ENCODE measurements at regions of chr10 and their contacts with region 1.

Region 1: GRCh38 chr10:6202684-6203330 is at the start of gene PFKFB3:
- DNase-seq: peak; percentile 66 to 99 (median 77)
- ATAC-seq: peak; percentile 81
- H3K4me3 ChIP-seq: peak within 1 kb of the TSS; percentile 84
- H3K4me3 Mint-ChIP-seq: peak within 1 kb of the TSS; percentile 92 to 100 (median 97)
- H3K27ac ChIP-seq: peak within 1 kb of the TSS; percentile 70
- H3K27ac Mint-ChIP-seq: peak within 1 kb of the TSS; percentile 81 to 97 (median 93)
- H3K4me1 ChIP-seq: peaks cover 0 to 12% of the 10 kb centered on the region in 2 donors
- H3K4me1 Mint-ChIP-seq: peaks cover 14 to 44% (median 35%) of the 10 kb centered on the region in 7 donors
- H3K27me3 ChIP-seq: no peaks in the 10 kb centered on the region
- H3K27me3 Mint-ChIP-seq: no peaks in the 10 kb centered on the region
- total RNA-seq, gene PFKFB3: 65.9 to 129 (median 80.5) TPM

Region 2: GRCh38 chr10:5977471-5978229 is 225.2 kb before region 1 on chr10 and contains the start of gene IL15RA:
- CTCF ChIA-PET with region 1: no interaction called
- POLR2A ChIA-PET with region 1: no interaction called
- intact Hi-C with region 1: loop called (anchors 2 to 5 kb)
- DNase-seq: peak; percentile 60 to 89 (median 71)
- ATAC-seq: peak; percentile 84
- H3K4me3 ChIP-seq: peak within 1 kb of the TSS; percentile 97
- H3K4me3 Mint-ChIP-seq: peak within 1 kb of the TSS; percentile 89 to 98 (median 96)
- H3K27ac ChIP-seq: peak within 1 kb of the TSS; percentile 74
- H3K27ac Mint-ChIP-seq: peak within 1 kb of the TSS; percentile 85 to 97 (median 89)
- H3K4me1 ChIP-seq: peaks cover 0 to 6% of the 10 kb centered on the region in 2 donors
- H3K4me1 Mint-ChIP-seq: peaks cover 12 to 36% (median 21%) of the 10 kb centered on the region in 7 donors
- H3K27me3 ChIP-seq: no peaks in the 10 kb centered on the region
- H3K27me3 Mint-ChIP-seq: peaks cover 0 to 21% (median 0%) of the 10 kb centered on the region in 5 donors
- total RNA-seq, gene IL15RA: 3.5 to 24.9 (median 5.6) TPM

Region 3: GRCh38 chr10:6108603-6109443 is 94.0 kb before region 1 on chr10:
- CTCF ChIA-PET with region 1: interaction called, 6 read pairs
- POLR2A ChIA-PET with region 1: interaction called, 7 read pairs
- intact Hi-C with region 1: loop called (anchors 1 kb)
- DNase-seq: peak in 7 of 9 donors; percentile 38 to 66 (median 62)
- ATAC-seq: peak; percentile 85
- H3K4me3 ChIP-seq: no peak overlapping the region
- H3K4me3 Mint-ChIP-seq: peak overlapping the region in 3 of 10 donors; percentile 2 to 37 (median 29)
- H3K27ac ChIP-seq: no peak overlapping the region
- H3K27ac Mint-ChIP-seq: peak overlapping the region; percentile 37 to 91 (median 80)
- H3K4me1 ChIP-seq: peaks cover 10 to 11% of the 10 kb centered on the region in 2 donors
- H3K4me1 Mint-ChIP-seq: peaks cover 11 to 38% (median 23%) of the 10 kb centered on the region in 7 donors
- H3K27me3 ChIP-seq: no peaks in the 10 kb centered on the region
- H3K27me3 Mint-ChIP-seq: no peaks in the 10 kb centered on the region

Region 4: DNA sequence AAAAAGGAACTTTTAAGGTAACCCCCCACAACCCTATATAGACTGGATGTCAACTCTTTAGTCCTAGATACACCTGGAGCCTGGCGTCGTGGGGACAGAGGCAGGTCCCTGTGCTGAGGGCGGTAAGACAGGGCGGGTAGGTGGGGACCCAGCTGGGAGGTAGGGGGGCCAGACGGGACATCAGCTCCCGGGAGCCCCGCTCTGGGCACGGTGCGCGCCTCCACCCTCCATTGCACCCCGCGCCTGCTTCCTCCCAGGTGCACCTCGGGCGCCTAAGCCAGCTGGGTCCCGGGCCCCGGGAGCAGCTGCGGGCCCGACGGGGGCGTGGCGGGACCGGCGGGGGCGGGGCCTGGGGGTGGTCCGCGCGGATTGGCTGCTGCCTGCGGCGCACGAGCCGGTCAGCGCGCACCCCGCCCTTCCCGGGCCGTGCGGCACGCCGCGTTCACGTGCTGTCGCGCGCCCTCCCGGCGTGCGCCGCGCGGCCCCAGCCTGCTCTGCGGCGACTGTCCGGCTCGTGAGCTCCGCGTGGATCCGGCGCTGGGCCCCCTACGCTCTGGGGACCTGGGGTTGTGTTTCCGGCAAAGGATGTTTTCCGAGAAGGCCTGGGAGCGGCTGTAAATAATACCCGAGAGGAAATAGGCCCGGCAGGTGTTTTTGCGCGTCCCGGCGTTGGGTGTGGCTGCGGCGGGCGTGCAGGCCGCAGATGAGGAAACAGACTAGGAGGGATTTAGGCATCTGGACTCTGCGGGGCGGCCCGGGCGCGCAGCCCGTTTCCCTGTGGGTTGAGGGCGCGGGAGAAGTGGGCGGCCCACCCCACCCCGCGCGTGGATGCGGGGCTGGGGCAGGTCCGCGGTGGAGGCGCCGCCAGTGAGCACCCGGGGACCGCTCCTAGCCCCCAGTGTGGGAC is 39.2 kb before region 1 on chr10:
- CTCF ChIA-PET with region 1: interaction called, 9 read pairs
- POLR2A ChIA-PET with region 1: interaction called, 32 read pairs
- intact Hi-C with region 1: loop called (anchors 1 kb)
- DNase-seq: peak; percentile 89 to 95 (median 94)
- ATAC-seq: peak; percentile 96
- H3K4me3 ChIP-seq: peak overlapping the region; percentile 81
- H3K4me3 Mint-ChIP-seq: peak overlapping the region; percentile 85 to 95 (median 92)
- H3K27ac ChIP-seq: peak overlapping the region; percentile 95
- H3K27ac Mint-ChIP-seq: peak overlapping the region; percentile 91 to 99 (median 97)
- H3K4me1 ChIP-seq: peaks cover 25 to 33% of the 10 kb centered on the region in 2 donors
- H3K4me1 Mint-ChIP-seq: peaks cover 30 to 64% (median 57%) of the 10 kb centered on the region in 7 donors
- H3K27me3 ChIP-seq: no peaks in the 10 kb centered on the region
- H3K27me3 Mint-ChIP-seq: no peaks in the 10 kb centered on the region

Region 5: GRCh38 chr10:6292741-6293151 is 89.9 kb after region 1 on chr10:
- CTCF ChIA-PET with region 1: no interaction called
- POLR2A ChIA-PET with region 1: no interaction called
- intact Hi-C with region 1: loop called (anchors 5 kb)
- DNase-seq: no peak
- ATAC-seq: no peak
- H3K4me3 ChIP-seq: no peak overlapping the region
- H3K4me3 Mint-ChIP-seq: peak overlapping the region in 2 of 10 donors; percentile 6 to 26
- H3K27ac ChIP-seq: no peak overlapping the region
- H3K27ac Mint-ChIP-seq: peak overlapping the region in 7 of 9 donors; percentile 10 to 72 (median 34)
- H3K4me1 ChIP-seq: peaks cover 6 to 8% of the 10 kb centered on the region in 2 donors
- H3K4me1 Mint-ChIP-seq: peaks cover 4 to 55% (median 32%) of the 10 kb centered on the region in 7 donors
- H3K27me3 ChIP-seq: no peaks in the 10 kb centered on the region
- H3K27me3 Mint-ChIP-seq: no peaks in the 10 kb centered on the region

Region 6: GRCh38 chr10:6401562-6402348 is 198.9 kb after region 1 on chr10:
- CTCF ChIA-PET with region 1: interaction called, 59 read pairs
- POLR2A ChIA-PET with region 1: interaction called, 26 read pairs
- intact Hi-C with region 1: loop called (anchors 1 kb)
- DNase-seq: peak in 8 of 9 donors; percentile 49 to 74 (median 66)
- ATAC-seq: peak; percentile 87
- H3K4me3 ChIP-seq: no peak overlapping the region
- H3K4me3 Mint-ChIP-seq: peak overlapping the region in 9 of 10 donors; percentile 0 to 49 (median 38)
- H3K27ac ChIP-seq: no peak overlapping the region
- H3K27ac Mint-ChIP-seq: peak overlapping the region in 8 of 9 donors; percentile 4 to 82 (median 56)
- H3K4me1 ChIP-seq: peaks cover 0 to 11% of the 10 kb centered on the region in 2 donors
- H3K4me1 Mint-ChIP-seq: peaks cover 4 to 33% (median 18%) of the 10 kb centered on the region in 7 donors
- H3K27me3 ChIP-seq: no peaks in the 10 kb centered on the region
- H3K27me3 Mint-ChIP-seq: peaks cover 0 to 13% (median 0%) of the 10 kb centered on the region in 5 donors

Region 7: DNA sequence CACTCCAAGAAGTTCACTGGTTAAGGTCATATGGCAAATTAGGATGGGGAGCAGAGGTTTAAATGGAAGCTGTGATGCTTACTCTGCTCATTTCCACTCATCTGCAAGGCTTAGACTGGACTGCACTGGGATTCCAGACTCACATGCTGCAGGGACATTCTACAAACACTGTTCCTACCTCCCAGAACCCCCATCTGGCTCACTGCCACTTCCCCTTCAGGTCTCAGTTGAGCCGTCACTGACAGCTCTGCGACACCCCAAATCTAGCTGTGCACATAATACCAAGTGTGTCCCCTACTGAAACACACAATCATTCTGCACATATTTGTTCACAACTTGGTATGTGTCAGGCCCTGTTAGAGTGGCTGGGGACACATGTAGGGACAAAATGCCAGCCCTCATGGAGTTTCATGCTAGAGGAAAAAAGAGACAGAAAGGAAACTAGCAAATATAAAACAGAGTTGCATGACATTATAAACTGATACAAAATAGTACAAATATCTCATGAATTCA is 371.9 kb after region 1 on chr10:
- CTCF ChIA-PET with region 1: no interaction called
- POLR2A ChIA-PET with region 1: no interaction called
- intact Hi-C with region 1: no loop called
- DNase-seq: no peak
- ATAC-seq: no peak
- H3K4me3 ChIP-seq: no peak overlapping the region
- H3K4me3 Mint-ChIP-seq: peak overlapping the region in 9 of 10 donors; percentile 51 to 79 (median 58)
- H3K27ac ChIP-seq: peak overlapping the region; percentile 25
- H3K27ac Mint-ChIP-seq: peak overlapping the region in 8 of 9 donors; percentile 26 to 85 (median 52)
- H3K4me1 ChIP-seq: peaks cover 52 to 69% of the 10 kb centered on the region in 2 donors
- H3K4me1 Mint-ChIP-seq: peaks cover 65 to 85% (median 78%) of the 10 kb centered on the region in 7 donors
- H3K27me3 ChIP-seq: no peaks in the 10 kb centered on the region
- H3K27me3 Mint-ChIP-seq: no peaks in the 10 kb centered on the region

Region 8: DNA sequence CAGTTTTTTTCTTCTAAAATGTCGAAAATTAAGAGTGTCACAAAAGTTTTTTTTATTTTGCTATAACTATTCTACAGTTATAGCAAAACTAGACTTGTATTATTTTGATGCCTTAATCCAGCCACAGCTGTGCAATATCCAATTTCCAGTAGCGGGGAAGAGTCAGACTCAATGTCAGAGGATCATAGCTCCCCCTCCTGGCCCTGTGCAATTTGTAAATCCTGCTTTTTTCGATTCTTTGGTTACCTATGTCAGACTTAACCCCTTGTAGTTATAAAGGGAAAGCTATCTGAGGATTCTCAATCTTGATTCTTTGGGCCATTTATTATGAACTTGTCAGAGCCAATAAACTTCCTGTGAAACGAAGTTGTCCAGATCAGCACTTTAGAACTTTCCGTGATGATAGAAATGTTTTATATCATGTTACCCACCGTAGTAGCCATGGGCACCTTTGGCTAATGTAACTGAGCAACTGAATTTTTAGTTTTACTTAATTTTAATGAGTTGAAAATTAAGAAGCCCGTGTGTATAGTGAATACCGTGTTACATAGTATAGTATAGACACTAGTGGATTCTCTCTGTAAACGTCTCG is 465.0 kb after region 1 on chr10:
- CTCF ChIA-PET with region 1: no interaction called
- POLR2A ChIA-PET with region 1: no interaction called
- intact Hi-C with region 1: loop called (anchors 1 to 5 kb)
- DNase-seq: peak in 6 of 9 donors; percentile 17 to 45 (median 30)
- ATAC-seq: peak; percentile 59
- H3K4me3 ChIP-seq: no peak overlapping the region
- H3K4me3 Mint-ChIP-seq: no peak overlapping the region
- H3K27ac ChIP-seq: no peak overlapping the region
- H3K27ac Mint-ChIP-seq: no peak overlapping the region
- H3K4me1 ChIP-seq: peaks cover 0 to 10% of the 10 kb centered on the region in 2 donors
- H3K4me1 Mint-ChIP-seq: peaks cover 12 to 35% (median 24%) of the 10 kb centered on the region in 7 donors
- H3K27me3 ChIP-seq: no peaks in the 10 kb centered on the region
- H3K27me3 Mint-ChIP-seq: peaks cover 0 to 13% (median 0%) of the 10 kb centered on the region in 5 donors